ENCODE measurements at regions of chr17 and their contacts with region 1.

Region 1: DNA sequence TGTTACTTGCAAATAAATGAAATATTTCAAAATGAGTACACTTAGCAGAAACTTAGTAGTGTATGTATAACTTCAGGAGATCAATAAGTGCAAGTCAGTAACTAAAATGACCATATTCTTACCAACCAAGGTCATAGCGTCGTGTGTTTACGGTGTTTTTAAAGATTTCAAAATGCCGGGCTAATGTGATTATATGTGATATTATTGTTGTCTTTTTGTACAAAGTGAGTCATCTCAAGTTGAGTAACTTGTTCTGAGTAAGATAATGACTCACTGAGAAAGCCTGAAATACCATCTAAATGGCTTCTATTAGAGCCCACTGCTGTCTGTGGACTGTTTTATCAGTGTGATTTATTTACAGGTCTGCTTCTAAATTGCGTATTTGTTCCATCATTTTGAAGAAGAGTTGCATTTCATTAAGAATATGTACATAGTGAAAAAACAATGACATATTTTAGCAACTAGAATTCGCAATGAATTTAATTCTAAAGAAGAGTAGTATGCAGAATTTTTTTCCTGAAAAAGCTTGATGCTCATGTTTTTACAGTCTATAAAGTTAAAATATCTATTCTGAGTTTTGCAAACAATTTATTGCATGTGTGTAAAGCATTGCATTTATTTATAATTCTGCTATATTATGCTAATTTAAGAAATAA is 12.7 kb downstream of the KRT12 start:
- DNase-seq: no peak
- H3K4me3 Mint-ChIP-seq: peak overlapping the region; percentile 33
- H3K27ac Mint-ChIP-seq: peak overlapping the region; percentile 86
- H3K4me1 Mint-ChIP-seq: peaks cover 85% of the 10 kb centered on the region
- H3K27me3 Mint-ChIP-seq: no peaks in the 10 kb centered on the region
- CTCF ChIP-seq: no peak

Region 2: GRCh38 chr17:40791787-40792436 is 62.4 kb before region 1 on chr17:
- CTCF ChIA-PET with region 1: interaction called, 39 read pairs
- intact Hi-C with region 1: loop called (anchors 1 kb)
- DNase-seq: peak; percentile 59
- H3K4me3 Mint-ChIP-seq: no peak overlapping the region
- H3K27ac Mint-ChIP-seq: no peak overlapping the region
- H3K4me1 Mint-ChIP-seq: no peaks in the 10 kb centered on the region
- H3K27me3 Mint-ChIP-seq: peaks cover 40% of the 10 kb centered on the region
- CTCF ChIP-seq: peak; percentile 100

Region 3: GRCh38 chr17:40841246-40841645 is 13.0 kb before region 1 on chr17:
- CTCF ChIA-PET with region 1: interaction called, 57 read pairs
- intact Hi-C with region 1: no loop called
- DNase-seq: no peak
- H3K4me3 Mint-ChIP-seq: no peak overlapping the region
- H3K27ac Mint-ChIP-seq: no peak overlapping the region
- H3K4me1 Mint-ChIP-seq: peaks cover 16% of the 10 kb centered on the region
- H3K27me3 Mint-ChIP-seq: no peaks in the 10 kb centered on the region
- CTCF ChIP-seq: no peak

Region 4: DNA sequence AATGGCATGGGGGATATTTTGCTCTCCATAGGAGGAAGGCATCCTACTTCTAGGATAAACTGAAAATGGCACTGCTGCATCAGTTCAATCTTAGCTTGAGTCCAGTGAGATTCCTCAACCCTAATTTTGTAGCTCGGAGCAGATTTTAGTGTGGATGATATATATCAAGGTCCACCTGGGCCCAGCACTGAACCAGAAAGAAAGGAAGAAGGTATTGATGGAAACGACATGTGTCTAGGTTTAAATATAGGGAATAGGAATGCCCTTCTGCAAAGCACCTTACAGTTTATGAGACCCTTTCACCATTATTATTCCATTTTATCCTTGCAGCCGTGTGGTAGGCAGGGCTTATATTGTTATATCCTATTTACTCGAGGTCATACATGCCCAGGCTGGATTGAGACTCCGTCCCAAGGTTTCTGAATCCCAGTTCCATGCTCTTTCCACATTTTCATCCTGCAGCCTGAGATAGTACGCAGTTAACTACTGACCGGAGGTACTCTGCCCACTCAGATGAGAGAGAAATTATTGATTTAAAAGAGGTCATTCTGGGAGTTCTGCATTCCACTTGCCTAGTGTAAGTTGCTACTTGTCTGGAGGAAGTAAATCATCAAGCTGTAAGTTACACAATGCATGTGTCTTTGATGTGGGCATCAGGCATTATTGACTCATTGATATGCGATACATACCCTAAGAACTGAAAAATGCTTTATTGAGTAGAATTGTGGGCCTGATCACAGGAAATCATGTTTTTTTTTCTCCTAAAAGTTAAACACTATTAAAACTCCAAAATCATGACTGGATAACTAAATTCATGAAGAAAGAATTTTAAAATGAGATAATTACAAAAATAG is 102.3 kb after region 1 on chr17:
- CTCF ChIA-PET with region 1: interaction called, 5 read pairs
- intact Hi-C with region 1: loop called (anchors 5 kb)
- DNase-seq: peak; percentile 88
- H3K4me3 Mint-ChIP-seq: peak overlapping the region; percentile 27
- H3K27ac Mint-ChIP-seq: peak overlapping the region; percentile 94
- H3K4me1 Mint-ChIP-seq: peaks cover 97% of the 10 kb centered on the region
- H3K27me3 Mint-ChIP-seq: no peaks in the 10 kb centered on the region
- CTCF ChIP-seq: no peak

Region 5: DNA sequence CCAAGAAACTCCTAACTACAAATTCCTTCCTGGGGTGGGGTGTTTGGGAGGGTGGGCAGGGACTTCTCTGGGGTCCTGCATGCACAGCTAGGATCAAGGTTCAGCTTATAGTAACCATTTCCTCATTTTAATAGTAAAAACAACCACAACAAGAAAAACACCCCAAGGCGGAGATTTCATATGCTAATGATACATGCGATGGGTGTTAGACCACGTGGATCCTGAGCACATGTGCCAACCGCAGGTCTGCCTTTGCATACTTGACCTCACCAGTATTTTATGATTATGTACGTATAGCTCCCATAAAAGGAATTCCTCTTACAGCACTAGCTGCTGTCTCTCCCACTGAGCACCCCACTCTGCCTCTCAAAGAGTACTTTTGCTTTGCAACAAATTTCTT is 262.0 kb after region 1 on chr17:
- CTCF ChIA-PET with region 1: no interaction called
- intact Hi-C with region 1: no loop called
- DNase-seq: no peak
- H3K4me3 Mint-ChIP-seq: no peak overlapping the region
- H3K27ac Mint-ChIP-seq: no peak overlapping the region
- H3K4me1 Mint-ChIP-seq: peaks cover 22% of the 10 kb centered on the region
- H3K27me3 Mint-ChIP-seq: no peaks in the 10 kb centered on the region
- CTCF ChIP-seq: no peak

Region 6: DNA sequence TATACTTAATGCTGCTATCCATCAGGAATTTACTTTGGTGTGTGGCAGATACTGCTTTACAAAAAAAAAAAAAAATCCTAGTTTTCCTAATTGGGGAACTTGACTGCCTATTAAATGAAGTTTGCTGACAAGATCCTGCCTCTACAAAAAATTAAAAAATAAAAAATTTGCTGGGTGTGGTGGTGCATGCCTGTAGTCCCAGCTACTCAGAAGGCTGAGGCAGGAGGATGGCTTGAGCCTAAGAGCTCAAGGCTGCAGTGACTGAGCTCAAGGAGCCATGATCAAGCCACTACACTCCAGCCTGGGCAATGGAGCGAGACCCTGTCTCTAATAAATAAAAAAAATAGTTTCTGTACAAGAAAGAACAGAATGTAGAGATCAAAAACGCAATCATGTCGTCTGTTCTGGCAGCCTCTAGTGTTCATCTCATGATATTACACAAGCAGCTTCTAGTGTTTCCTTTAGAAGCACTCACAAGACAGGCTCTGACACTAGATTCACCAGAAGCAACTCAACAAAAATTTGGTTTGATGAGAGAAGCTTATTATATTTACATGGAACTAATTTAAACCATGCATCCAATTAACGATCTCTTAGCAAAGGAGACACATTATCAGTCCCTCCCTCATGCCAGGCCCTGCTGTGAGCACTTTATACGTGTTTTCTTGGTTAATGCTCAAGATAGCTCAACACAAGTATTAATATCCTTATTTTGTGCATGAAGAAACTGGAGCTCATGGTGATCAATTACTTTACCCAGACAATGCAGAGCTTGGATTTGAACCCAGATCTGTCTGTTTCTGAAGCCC is 468.0 kb after region 1 on chr17:
- CTCF ChIA-PET with region 1: interaction called, 17 read pairs
- intact Hi-C with region 1: no loop called
- DNase-seq: no peak
- H3K4me3 Mint-ChIP-seq: no peak overlapping the region
- H3K27ac Mint-ChIP-seq: no peak overlapping the region
- H3K4me1 Mint-ChIP-seq: peaks cover 23% of the 10 kb centered on the region
- H3K27me3 Mint-ChIP-seq: no peaks in the 10 kb centered on the region
- CTCF ChIP-seq: peak; percentile 80

Region 7: GRCh38 chr17:41521574-41522261 is 667.4 kb after region 1 on chr17:
- CTCF ChIA-PET with region 1: interaction called, 3 read pairs
- intact Hi-C with region 1: loop called (anchors 5 kb)
- DNase-seq: peak; percentile 100
- H3K4me3 Mint-ChIP-seq: peak overlapping the region; percentile 95
- H3K27ac Mint-ChIP-seq: peak overlapping the region; percentile 99
- H3K4me1 Mint-ChIP-seq: peaks cover 73% of the 10 kb centered on the region
- H3K27me3 Mint-ChIP-seq: no peaks in the 10 kb centered on the region
- CTCF ChIP-seq: peak; percentile 11

Measured in Calu3 (cell line).